ENCODE measurements at regions of chr10 and their contacts with region 1.

Region 1: GRCh38 chr10:97217299-97217698 is 31.5 kb upstream of the SLIT1 start:
- DNase-seq: no peak
- ATAC-seq: no peak
- H3K4me3 Mint-ChIP-seq: no peak overlapping the region
- H3K27ac Mint-ChIP-seq: peak overlapping the region; percentile 6
- H3K4me1 Mint-ChIP-seq: peaks cover 27% of the 10 kb centered on the region
- H3K27me3 Mint-ChIP-seq: no peaks in the 10 kb centered on the region

Region 2: DNA sequence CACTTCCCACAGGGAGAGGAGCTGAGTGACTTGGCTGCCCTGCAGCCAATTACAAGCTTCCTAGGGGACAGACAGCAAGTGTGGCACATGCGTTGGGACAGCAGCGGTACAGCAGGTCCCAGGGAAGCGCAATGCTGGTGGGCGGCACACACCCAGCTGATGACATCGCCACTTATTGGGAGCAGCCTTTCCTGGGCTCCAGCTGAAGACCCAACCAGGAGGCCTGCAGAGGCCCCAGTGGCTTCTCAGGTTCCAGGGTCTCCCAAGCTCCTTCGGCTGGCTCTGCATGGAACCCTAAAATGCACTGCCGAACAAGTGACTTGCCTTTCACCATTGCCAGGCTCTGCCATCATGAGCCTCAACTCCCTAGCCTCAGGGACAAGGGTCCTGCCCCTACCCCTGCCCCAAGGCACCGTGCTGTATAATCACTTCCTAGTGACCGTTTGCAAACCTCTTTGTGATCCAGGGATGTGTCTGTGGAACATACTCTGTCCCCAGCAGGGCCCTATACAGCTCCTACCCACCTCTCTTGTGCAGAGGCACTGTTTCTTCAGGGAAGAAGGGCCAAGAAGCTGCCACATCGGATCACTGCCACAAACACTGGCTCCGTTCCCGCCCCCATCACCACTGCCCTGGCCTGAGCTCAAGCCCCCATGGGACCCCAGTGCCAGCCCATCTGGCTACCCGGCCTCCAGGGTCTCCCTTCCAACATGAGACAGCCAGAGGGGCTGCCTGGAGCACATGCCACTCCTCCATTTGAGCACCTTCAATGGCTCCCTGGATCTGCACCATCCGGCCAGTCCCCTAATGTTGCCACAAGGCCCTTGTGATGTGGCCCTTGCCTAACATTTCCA is 12.2 kb before region 1 on chr10:
- CTCF ChIA-PET with region 1: interaction called, 37 read pairs
- POLR2A ChIA-PET with region 1: no interaction called
- intact Hi-C with region 1: no loop called
- DNase-seq: no peak
- ATAC-seq: no peak
- H3K4me3 Mint-ChIP-seq: no peak overlapping the region
- H3K27ac Mint-ChIP-seq: no peak overlapping the region
- H3K4me1 Mint-ChIP-seq: no peaks in the 10 kb centered on the region
- H3K27me3 Mint-ChIP-seq: no peaks in the 10 kb centered on the region

Region 3: DNA sequence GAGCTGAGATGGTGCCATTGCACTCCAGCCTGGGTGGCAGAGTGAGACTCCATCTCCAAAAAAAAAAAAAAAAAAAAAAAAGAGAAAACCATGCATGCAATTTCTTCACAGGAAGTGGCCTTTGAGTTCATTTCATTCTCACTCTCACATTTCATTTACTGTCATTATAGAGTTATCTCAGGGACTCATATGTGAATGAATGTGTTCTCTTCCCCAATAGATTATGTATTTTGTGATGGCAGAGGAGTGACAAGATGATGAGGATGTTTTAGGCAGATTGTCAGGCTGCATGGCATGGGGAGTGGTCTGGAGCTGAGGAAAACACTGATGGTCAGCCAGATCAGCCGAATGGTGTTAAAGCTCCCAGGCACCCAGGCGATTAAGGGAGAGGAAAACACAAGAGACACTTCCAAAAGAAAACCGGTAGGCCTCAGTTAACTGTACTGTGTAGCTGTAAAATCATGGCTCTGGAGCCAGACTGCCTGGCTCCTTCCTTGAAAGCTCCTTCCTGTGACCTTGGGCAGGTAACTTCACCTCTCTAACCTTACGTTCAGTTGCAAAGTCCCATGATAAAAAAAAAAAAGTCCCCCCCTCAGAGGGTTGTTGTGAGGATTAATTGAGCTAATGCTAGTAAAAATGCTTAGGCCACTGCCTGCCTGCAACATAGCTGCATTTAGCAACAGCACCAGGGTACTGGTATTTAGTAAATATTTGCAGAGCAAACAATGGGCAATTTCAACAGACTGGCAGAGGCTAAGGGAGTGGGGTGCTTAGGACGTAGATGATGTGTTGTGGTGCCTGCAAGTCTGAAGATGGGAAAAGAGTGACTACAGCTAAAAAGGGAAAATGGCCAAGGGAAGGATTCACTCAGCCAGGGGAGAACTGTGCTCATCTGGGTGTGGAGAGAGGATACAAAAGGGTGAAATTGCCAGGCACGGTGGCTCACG is 110.3 kb after region 1 on chr10:
- CTCF ChIA-PET with region 1: no interaction called
- POLR2A ChIA-PET with region 1: no interaction called
- intact Hi-C with region 1: loop called in 1 of 2 experiments (anchors 5 kb)
- DNase-seq: no peak
- ATAC-seq: peak; percentile 79
- H3K4me3 Mint-ChIP-seq: no peak overlapping the region
- H3K27ac Mint-ChIP-seq: peak overlapping the region; percentile 74
- H3K4me1 Mint-ChIP-seq: peaks cover 50% of the 10 kb centered on the region
- H3K27me3 Mint-ChIP-seq: no peaks in the 10 kb centered on the region